CD8-positive, alpha-beta memory T cell (primary cell): ENCODE measurements at regions of chr21 and their contacts with region 1.

Region 1: DNA sequence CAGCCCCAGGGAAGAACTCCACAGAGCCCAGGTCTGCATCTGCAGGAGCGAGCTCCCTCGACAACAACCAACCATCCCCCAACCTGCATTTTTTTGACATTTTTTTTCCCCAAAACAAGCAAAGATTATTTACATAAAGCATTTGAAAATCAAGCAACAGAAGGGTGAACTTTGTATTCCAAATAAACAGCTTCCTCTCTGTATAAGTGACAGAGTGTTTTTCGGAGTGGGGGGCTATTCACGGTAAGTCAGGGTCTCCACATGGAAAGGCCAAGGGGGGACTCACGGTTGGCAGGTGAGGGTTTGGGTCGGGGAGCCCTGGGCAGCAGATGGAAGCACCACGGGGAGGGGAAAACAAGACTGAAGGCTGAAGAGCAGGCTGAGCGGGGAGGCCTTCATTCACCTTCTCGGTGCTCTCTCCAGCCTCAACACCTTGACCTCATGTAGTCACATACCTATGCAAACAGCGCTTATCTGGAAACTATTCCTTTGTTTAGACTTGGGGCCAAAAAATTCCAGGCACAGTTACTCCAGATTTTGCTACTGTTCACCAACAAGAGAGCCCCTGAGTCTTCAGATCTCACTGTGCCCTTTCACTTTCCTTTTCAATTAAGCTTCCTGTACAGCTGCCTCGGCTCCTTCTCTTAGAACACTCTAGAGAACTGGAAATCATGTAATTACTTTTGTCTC is 27.6 kb downstream of the C2CD2 start:
- DNase-seq: peak in 2 of 5 donors; percentile 48 to 65
- H3K4me3 ChIP-seq: peak overlapping the region; percentile 66
- H3K4me3 Mint-ChIP-seq: peak overlapping the region; percentile 87 to 97 (median 95)
- H3K27ac ChIP-seq: peak overlapping the region; percentile 71
- H3K27ac Mint-ChIP-seq: peak overlapping the region; percentile 79 to 100 (median 98)
- H3K4me1 ChIP-seq: peaks cover 44% of the 10 kb centered on the region
- H3K4me1 Mint-ChIP-seq: peaks cover 35 to 56% (median 43%) of the 10 kb centered on the region in 3 donors
- H3K27me3 ChIP-seq: no peaks in the 10 kb centered on the region
- H3K27me3 Mint-ChIP-seq: peaks cover 1 to 5% of the 10 kb centered on the region in 2 donors

Region 2: GRCh38 chr21:41879190-41879998 is 46.9 kb before region 1 on chr21 and contains the start of gene PRDM15:
- CTCF ChIA-PET with region 1: interaction called, 3 read pairs
- POLR2A ChIA-PET with region 1: interaction called, 24 read pairs
- DNase-seq: peak; percentile 69 to 84 (median 73)
- H3K4me3 ChIP-seq: peak within 1 kb of the TSS; percentile 66
- H3K4me3 Mint-ChIP-seq: peak within 1 kb of the TSS; percentile 86 to 94 (median 90)
- H3K27ac ChIP-seq: peak within 1 kb of the TSS; percentile 69
- H3K27ac Mint-ChIP-seq: peak within 1 kb of the TSS; percentile 87 to 96 (median 94)
- H3K4me1 ChIP-seq: peaks cover 21% of the 10 kb centered on the region
- H3K4me1 Mint-ChIP-seq: peaks cover 21 to 34% (median 29%) of the 10 kb centered on the region in 3 donors
- H3K27me3 ChIP-seq: no peaks in the 10 kb centered on the region
- H3K27me3 Mint-ChIP-seq: no peaks in the 10 kb centered on the region
- total RNA-seq, gene PRDM15: 12.0 to 13.1 TPM